CD8-positive, alpha-beta T cell (primary cell): ENCODE measurements at regions of chr15 and their contacts with region 1.

Region 1: DNA sequence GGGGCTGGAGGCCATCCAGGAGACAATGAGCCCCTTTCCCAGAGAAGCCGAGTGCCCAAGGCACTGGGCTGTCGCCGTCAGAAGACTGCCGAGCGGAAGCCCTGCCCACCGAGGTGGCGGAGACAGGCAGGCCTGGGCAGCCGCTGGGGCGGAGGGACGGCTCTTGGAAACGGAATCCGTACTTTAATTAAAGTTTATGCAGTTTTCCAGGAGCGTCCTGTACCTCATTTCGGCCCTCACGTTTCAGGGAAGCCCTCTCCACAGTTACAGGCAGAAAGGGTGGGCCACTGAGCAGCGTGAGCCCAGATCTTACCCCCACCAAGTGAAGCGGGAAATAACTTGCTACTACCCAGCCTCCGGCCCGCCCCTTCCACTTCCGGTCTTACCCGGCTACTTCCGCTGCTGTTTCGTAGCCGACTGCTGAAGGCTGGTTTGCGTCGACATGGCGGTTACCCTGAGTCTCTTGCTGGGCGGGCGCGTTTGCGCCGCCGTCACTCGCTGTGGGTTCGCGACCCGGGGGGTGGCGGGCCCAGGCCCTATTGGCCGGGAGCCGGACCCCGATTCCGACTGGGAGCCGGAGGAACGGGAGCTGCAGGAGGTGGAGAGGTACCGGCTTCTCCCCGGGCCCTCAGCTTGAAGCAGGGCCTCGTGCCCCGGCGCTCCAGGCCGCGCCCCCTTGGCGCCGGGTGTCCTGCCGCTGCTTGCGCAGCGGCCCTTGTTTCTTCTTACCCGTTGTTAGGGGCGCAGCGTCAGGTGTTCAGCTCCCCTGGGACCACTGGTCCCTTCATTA is at the start of gene NGRN:
- DNase-seq: peak; percentile 84 to 95 (median 93)
- ATAC-seq: peak; percentile 81
- H3K4me3 ChIP-seq: peak within 1 kb of the TSS; percentile 79 to 86
- H3K4me3 Mint-ChIP-seq: peak within 1 kb of the TSS; percentile 94
- H3K27ac ChIP-seq: peak within 1 kb of the TSS; percentile 95 to 98
- H3K27ac Mint-ChIP-seq: peak within 1 kb of the TSS; percentile 98
- H3K4me1 ChIP-seq: peaks cover 43% of the 10 kb centered on the region
- H3K4me1 Mint-ChIP-seq: peaks cover 51% of the 10 kb centered on the region
- H3K27me3 ChIP-seq: no peaks in the 10 kb centered on the region
- H3K27me3 Mint-ChIP-seq: no peaks in the 10 kb centered on the region
- CTCF ChIP-seq: no peak
- total RNA-seq, gene NGRN: 57.8 to 62.0 TPM

Region 2: GRCh38 chr15:90201130-90201949 is 64.1 kb before region 1 on chr15 and contains the start of gene SEMA4B:
- CTCF ChIA-PET with region 1: interaction called, 3 read pairs
- POLR2A ChIA-PET with region 1: interaction called, 12 read pairs
- intact Hi-C with region 1: loop called in 1 of 2 experiments (anchors 1 kb)
- DNase-seq: peak; percentile 37 to 86 (median 74)
- ATAC-seq: peak; percentile 91
- H3K4me3 ChIP-seq: peak within 1 kb of the TSS; percentile 69 to 79
- H3K4me3 Mint-ChIP-seq: peak within 1 kb of the TSS; percentile 88
- H3K27ac ChIP-seq: peak within 1 kb of the TSS; percentile 56 to 60
- H3K27ac Mint-ChIP-seq: peak within 1 kb of the TSS; percentile 82
- H3K4me1 ChIP-seq: peaks cover 21% of the 10 kb centered on the region
- H3K4me1 Mint-ChIP-seq: peaks cover 22% of the 10 kb centered on the region
- H3K27me3 ChIP-seq: no peaks in the 10 kb centered on the region
- H3K27me3 Mint-ChIP-seq: no peaks in the 10 kb centered on the region
- CTCF ChIP-seq: no peak
- total RNA-seq, gene SEMA4B: 7.5 to 12.3 TPM

Region 3: DNA sequence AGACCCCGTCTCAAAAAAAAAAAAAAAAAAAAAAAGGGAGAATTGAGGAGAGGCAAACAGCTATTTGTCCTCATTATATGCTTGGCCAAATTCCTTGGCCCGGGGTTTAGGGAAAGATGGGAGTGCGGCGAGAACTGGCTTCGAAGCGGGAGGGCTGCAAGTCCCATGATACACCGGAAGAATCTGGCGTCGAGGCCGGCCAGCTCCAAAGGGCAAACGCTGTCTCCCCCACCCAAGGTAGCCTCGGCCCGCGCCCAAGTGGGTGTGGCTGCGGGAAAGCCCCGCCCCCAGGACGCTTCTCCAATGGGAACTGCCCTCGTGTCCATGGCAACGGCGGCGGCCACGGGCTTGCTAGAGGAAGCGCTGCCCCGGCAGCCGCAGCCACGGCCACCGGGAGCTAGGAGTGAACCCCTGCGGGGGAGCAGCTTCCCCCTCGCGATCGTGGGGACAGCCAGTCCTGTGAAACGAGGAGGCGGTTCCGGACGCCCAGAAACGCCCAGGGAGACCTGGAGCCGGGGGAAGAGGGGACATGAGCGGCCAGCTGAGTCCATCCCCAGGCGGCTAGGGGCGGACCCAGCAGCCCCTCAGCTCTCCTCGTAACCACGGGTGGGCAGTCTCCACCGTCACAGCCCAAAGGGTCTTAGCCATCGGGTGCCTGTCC is 16.1 kb before region 1 on chr15 and contains the start of gene TTLL13:
- CTCF ChIA-PET with region 1: interaction called, 3 read pairs
- POLR2A ChIA-PET with region 1: no interaction called
- intact Hi-C with region 1: loop called in 1 of 2 experiments (anchors 2 kb)
- DNase-seq: peak in 8 of 9 experiments; percentile 53 to 82 (median 72)
- ATAC-seq: peak; percentile 59
- H3K4me3 ChIP-seq: peak within 1 kb of the TSS; percentile 60 to 64
- H3K4me3 Mint-ChIP-seq: peak within 1 kb of the TSS; percentile 69
- H3K27ac ChIP-seq: peak within 1 kb of the TSS in 1 of 2 experiments; percentile 27
- H3K27ac Mint-ChIP-seq: no peak within 1 kb of the TSS
- H3K4me1 ChIP-seq: peaks cover 7% of the 10 kb centered on the region
- H3K4me1 Mint-ChIP-seq: peaks cover 13% of the 10 kb centered on the region
- H3K27me3 ChIP-seq: no peaks in the 10 kb centered on the region
- H3K27me3 Mint-ChIP-seq: no peaks in the 10 kb centered on the region
- CTCF ChIP-seq: no peak
- total RNA-seq, gene TTLL13: 0.28 to 1.1 TPM